Activated CD4-positive, alpha-beta T cell treated with anti-CD3 and anti-CD28 coated beads, Interleukin-2, amount 10 ng/mL, durations not matched to agents 7 days and 5 days (primary cell): ENCODE measurements at regions of chr3 and their contacts with region 1.

Region 1: DNA sequence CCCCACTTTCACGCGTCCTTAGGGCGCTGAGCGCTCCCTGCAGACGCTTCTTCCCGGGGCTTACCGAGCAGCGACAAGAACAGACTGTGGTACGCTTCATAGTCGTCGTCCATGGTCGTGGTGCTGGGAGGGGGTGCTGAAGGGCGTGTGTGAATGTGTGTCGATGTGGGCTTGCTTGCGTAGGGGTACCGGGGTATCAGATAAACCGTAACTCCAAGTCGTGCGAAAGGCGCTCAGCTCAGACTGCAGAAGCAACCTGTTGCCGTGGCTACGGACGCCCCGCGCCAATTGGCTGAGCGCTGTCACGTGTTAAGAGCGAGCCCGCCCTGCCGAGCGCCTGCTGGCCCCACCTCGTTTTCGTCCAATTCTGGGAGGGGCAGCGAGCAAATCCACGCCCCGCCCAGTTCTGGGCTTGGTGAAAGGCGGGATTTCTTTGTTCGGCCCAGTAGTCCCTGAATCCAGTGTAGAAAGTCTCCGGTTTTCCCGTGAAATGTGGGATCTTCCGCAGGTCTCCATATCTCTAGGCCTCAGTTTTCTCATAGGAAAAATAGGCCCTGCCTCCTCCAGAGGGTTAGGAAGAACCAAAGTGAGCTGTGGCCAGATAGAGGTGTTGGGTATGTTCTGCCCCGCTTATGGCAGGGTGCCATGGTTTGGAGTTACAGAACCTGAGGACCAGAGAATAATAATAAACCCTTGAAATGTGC is at the start of gene EFCAB12:
- DNase-seq: peak; percentile 91
- H3K4me3 Mint-ChIP-seq: peak within 1 kb of the TSS; percentile 59
- H3K27ac Mint-ChIP-seq: peak within 1 kb of the TSS; percentile 66
- H3K4me1 Mint-ChIP-seq: peaks cover 33% of the 10 kb centered on the region
- H3K27me3 Mint-ChIP-seq: peaks cover 5% of the 10 kb centered on the region
- total RNA-seq, gene EFCAB12: 0.69 TPM

Region 2: GRCh38 chr3:129383292-129383860 is 45.2 kb before region 1 on chr3:
- CTCF ChIA-PET with region 1: no interaction called
- POLR2A ChIA-PET with region 1: no interaction called
- DNase-seq: peak; percentile 47
- H3K4me3 Mint-ChIP-seq: no peak overlapping the region
- H3K27ac Mint-ChIP-seq: no peak overlapping the region
- H3K4me1 Mint-ChIP-seq: no peaks in the 10 kb centered on the region
- H3K27me3 Mint-ChIP-seq: no peaks in the 10 kb centered on the region

Region 3: DNA sequence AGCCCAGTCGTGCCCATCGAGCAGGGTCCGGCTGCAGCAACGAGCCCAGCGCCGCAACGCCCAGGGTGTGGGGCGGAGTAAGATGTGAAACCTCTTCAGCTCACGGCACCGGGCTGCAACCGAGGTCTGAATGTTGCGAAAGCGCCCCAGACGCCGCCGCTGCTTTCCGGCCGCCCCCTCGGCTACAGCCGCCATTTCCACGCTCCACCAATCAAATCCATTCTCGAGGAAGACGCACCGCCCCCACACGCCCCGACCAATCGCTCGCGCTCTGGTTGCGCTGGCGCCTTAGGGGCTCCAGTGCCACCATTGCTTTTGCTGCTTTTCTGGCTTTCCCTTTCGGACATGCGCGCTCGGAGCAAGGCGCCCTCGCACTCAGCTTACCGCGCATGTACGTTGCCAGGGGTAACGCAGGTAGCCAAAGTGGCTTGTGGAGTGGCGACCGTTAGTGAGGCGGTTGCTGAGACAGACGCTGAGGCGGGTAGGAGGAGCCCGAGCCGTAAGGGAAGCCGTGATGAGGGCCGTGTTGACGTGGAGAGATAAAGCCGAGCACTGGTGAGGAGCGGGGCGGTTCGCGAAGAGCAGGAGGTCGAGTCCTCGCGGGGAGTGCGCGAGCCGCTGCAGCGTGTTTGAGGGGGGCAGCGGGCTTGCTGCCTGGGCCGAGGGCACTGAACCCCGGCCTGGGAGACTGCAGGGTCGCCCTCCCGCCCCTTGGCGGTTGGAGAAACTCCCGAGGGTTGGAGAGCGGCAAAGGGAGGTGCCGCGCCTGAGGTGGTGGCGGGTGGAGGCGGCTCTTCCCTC is 11.5 kb after region 1 on chr3 and contains the starts of genes IFT122 and MBD4:
- CTCF ChIA-PET with region 1: interaction called, 20 read pairs
- POLR2A ChIA-PET with region 1: no interaction called
- DNase-seq: peak; percentile 100
- H3K4me3 Mint-ChIP-seq: peak within 1 kb of the TSS; percentile 87
- H3K27ac Mint-ChIP-seq: peak within 1 kb of the TSS; percentile 95
- H3K4me1 Mint-ChIP-seq: peaks cover 64% of the 10 kb centered on the region
- H3K27me3 Mint-ChIP-seq: no peaks in the 10 kb centered on the region
- total RNA-seq, gene IFT122: 24.9 to 27.2 TPM
- total RNA-seq, gene MBD4: 47.9 to 50.6 TPM

Region 4: GRCh38 chr3:129723558-129724324 is 295.2 kb after region 1 on chr3:
- CTCF ChIA-PET with region 1: no interaction called
- POLR2A ChIA-PET with region 1: no interaction called
- DNase-seq: no peak
- H3K4me3 Mint-ChIP-seq: no peak overlapping the region
- H3K27ac Mint-ChIP-seq: no peak overlapping the region
- H3K4me1 Mint-ChIP-seq: no peaks in the 10 kb centered on the region
- H3K27me3 Mint-ChIP-seq: no peaks in the 10 kb centered on the region